Activated CD4-positive, alpha-beta memory T cell treated with anti-CD3 and anti-CD28 coated beads for 36 hours (primary cell): ENCODE measurements at regions of chr12 and their contacts with region 1.

Region 1: DNA sequence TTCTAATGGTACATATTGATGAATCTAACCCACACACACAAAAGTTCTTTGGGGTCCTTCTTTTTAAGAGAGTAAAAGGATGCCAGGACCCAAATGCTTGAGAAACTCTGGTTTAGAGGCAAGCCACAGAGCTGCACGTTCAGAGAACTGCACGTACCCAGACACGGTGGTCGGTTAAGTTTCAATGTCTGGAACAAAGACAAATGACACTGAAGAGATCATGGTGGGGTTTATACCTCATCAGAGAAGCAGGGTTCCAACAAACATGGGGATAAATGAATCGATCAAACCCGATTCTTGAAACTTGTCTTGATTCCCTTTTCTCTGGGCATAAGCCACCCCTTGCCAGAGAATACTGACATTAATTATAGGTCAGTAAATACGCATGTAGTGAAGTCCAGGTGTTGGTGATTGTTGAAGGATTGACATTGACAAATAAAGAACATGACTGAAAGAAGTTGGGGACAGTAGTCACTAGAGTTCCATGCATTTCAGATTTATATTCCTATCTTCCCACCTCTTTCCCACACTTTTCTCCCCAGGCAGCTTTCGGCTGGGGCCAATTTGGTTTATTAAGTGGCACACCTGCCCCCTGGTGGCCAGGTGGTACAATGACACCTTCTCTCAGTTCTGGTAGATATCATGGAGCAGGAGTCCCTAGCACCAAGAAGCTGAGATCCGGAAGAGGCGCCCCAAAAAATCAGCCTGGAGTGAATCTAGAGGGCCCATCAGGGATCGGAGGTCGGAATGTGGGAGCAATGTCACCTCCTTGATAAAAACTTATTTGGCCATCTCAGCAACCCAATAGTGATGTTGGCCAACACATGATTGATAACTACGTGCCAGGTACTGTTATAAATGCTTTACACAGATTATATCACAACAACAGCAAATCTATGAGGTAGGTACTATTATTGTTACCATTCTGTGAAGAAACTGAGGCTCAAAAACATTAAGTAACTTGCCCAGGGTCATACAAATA is 17.8 kb upstream of the HDAC7 start:
- DNase-seq: peak; percentile 76
- H3K4me3 Mint-ChIP-seq: no peak overlapping the region
- H3K27ac Mint-ChIP-seq: peak overlapping the region; percentile 68
- H3K4me1 Mint-ChIP-seq: peaks cover 59% of the 10 kb centered on the region
- H3K27me3 Mint-ChIP-seq: no peaks in the 10 kb centered on the region

Region 2: GRCh38 chr12:47651368-47652254 is 185.9 kb before region 1 on chr12:
- CTCF ChIA-PET with region 1: interaction called, 8 read pairs
- POLR2A ChIA-PET with region 1: no interaction called
- intact Hi-C with region 1: loop called (anchors 1 kb)
- DNase-seq: peak; percentile 64
- H3K4me3 Mint-ChIP-seq: no peak overlapping the region
- H3K27ac Mint-ChIP-seq: no peak overlapping the region
- H3K4me1 Mint-ChIP-seq: peaks cover 20% of the 10 kb centered on the region
- H3K27me3 Mint-ChIP-seq: no peaks in the 10 kb centered on the region

Region 3: GRCh38 chr12:47725893-47726292 is 111.6 kb before region 1 on chr12:
- CTCF ChIA-PET with region 1: interaction called, 13 read pairs
- POLR2A ChIA-PET with region 1: no interaction called
- intact Hi-C with region 1: no loop called
- DNase-seq: no peak
- H3K4me3 Mint-ChIP-seq: no peak overlapping the region
- H3K27ac Mint-ChIP-seq: no peak overlapping the region
- H3K4me1 Mint-ChIP-seq: peaks cover 7% of the 10 kb centered on the region
- H3K27me3 Mint-ChIP-seq: no peaks in the 10 kb centered on the region

Region 4: GRCh38 chr12:47767216-47767724 is 70.2 kb before region 1 on chr12:
- CTCF ChIA-PET with region 1: interaction called, 127 read pairs
- POLR2A ChIA-PET with region 1: interaction called, 7 read pairs
- intact Hi-C with region 1: no loop called
- DNase-seq: peak; percentile 86
- H3K4me3 Mint-ChIP-seq: no peak overlapping the region
- H3K27ac Mint-ChIP-seq: no peak overlapping the region
- H3K4me1 Mint-ChIP-seq: no peaks in the 10 kb centered on the region
- H3K27me3 Mint-ChIP-seq: no peaks in the 10 kb centered on the region

Region 5: GRCh38 chr12:47791874-47792273 is 45.6 kb before region 1 on chr12:
- CTCF ChIA-PET with region 1: interaction called, 795 read pairs
- POLR2A ChIA-PET with region 1: interaction called, 7 read pairs
- intact Hi-C with region 1: loop called (anchors 1 kb)
- DNase-seq: no peak
- H3K4me3 Mint-ChIP-seq: no peak overlapping the region
- H3K27ac Mint-ChIP-seq: peak overlapping the region; percentile 38
- H3K4me1 Mint-ChIP-seq: peaks cover 19% of the 10 kb centered on the region
- H3K27me3 Mint-ChIP-seq: no peaks in the 10 kb centered on the region

Region 6: DNA sequence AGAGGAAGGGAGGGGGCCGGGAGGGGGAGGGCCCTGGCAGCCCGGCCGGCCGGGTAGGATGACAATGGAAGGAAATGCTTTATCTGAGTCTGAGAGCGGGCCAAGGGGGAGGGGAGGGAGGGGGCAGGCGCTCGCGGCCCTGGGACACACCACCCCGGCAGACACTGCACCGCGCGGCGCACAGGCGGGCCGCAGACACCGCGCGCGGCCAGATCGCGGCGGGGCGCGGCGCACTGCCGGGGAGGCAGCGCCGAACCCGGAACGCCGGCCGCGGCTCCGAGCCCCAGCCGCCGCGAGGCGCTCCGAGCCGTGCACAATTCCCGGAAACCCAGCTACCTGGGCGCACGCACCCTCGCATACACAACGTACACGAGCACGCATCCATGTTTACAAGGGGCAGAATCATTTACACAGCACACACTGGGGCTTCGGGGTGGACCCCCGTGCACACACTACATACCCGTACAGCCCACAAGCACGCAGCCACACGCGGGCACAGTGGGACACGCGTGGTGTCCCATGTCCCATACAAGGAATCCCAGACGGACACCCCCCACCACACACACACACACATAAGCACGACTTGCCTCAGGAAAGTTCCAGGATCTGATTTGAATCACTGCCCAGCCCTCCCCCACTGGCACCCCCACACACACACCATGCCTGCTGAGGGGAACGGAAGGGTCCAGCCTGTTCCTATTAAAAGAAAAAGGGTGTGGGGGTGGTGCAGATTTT is 17.4 kb before region 1 on chr12 and contains the start of gene HDAC7:
- CTCF ChIA-PET with region 1: interaction called, 795 read pairs
- POLR2A ChIA-PET with region 1: interaction called, 540 read pairs
- intact Hi-C with region 1: loop called (anchors 1 kb)
- DNase-seq: peak; percentile 86
- H3K4me3 Mint-ChIP-seq: peak within 1 kb of the TSS; percentile 94
- H3K27ac Mint-ChIP-seq: peak within 1 kb of the TSS; percentile 99
- H3K4me1 Mint-ChIP-seq: peaks cover 68% of the 10 kb centered on the region
- H3K27me3 Mint-ChIP-seq: no peaks in the 10 kb centered on the region
- total RNA-seq, gene HDAC7: 257 to 280 TPM

Region 7: DNA sequence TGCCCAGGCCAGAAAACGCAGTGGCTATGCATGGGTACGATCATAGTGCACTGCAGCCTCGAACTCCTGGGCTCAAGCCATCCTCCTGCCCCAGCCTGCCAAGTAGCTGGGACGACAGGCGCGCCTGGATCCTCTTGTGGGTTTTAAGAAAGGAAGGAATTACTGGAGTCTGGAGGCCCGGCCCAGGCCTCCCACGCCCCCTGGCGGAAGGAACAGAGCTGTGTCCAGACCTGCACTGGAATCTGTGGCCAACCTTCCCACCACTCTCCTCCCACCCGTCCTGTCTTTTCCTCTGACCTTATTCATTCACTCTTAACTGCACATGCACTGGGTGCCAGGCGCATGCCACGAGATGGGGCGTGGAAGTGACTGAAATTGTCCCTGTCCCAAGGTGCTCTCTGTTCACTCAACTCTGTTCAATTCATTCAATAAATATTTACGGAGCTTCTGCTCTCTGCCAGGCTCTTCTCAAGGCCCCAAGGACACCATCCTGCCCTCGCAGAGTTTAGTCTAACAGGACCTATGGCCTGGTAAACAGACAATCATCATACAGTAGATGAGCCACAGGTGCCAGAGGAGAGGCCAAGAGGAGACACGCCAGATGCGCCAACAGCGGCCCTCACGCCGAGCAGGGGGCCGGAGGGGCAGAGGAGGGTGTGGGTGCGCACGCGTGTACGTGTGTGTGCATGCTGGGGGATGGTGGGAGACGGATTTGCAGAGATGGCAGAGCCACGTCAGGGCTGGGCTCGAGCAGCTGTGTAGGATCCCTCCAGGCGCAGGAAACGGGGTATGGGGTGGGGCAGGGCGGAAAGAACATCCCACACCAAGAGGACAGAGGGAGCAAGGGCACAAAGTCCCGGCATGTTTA is 112.2 kb after region 1 on chr12:
- CTCF ChIA-PET with region 1: interaction called, 13 read pairs
- POLR2A ChIA-PET with region 1: no interaction called
- intact Hi-C with region 1: no loop called
- DNase-seq: peak; percentile 72
- H3K4me3 Mint-ChIP-seq: no peak overlapping the region
- H3K27ac Mint-ChIP-seq: no peak overlapping the region
- H3K4me1 Mint-ChIP-seq: peaks cover 5% of the 10 kb centered on the region
- H3K27me3 Mint-ChIP-seq: peaks cover 3% of the 10 kb centered on the region

Region 8: DNA sequence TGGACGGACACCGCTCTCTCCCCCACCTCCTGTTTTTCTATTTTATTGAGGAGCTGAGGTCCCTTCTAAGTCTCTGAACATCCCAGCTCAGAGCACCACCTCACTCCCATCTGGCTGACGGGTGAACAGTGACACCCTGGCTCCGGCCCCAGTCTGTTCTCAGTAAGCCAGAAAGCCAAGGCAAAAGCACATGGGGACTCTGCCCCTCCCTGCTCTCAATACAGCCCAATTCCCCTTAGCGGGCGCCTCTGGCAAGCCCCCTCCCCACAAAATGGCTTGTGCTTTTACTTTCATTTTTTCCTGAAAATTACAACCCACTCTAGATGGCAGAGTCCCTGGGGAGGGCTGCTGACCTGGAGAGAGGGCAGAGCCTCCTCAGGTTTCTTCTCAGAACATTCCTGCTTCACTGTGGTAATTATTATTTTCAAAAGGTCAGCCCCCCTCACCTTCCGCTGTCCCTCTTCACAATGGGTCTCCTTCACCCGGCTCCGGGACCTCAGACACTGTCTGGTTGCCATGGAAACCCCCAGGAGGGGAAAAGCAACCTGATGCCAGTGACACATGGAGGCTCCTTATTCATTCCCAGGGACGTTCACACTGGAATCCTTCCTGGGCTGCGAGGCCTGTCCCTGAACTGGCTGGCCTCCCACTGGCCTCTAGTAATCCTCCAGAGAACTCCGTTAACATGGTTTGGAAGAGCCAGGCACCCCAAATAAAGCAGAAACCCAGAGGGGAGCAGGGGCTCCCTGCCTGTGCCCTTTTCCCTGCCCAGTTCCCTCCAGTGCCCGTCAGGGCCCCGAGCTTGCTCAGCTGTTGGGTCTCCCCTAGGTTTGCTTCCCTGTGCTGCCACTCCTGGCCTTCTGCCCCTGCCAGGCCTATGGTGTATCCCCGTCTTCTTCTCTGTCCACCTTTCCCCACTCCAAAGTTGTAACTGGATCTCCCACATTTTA is 150.9 kb after region 1 on chr12:
- CTCF ChIA-PET with region 1: no interaction called
- POLR2A ChIA-PET with region 1: no interaction called
- intact Hi-C with region 1: no loop called
- DNase-seq: no peak
- H3K4me3 Mint-ChIP-seq: no peak overlapping the region
- H3K27ac Mint-ChIP-seq: no peak overlapping the region
- H3K4me1 Mint-ChIP-seq: peaks cover 20% of the 10 kb centered on the region
- H3K27me3 Mint-ChIP-seq: peaks cover 4% of the 10 kb centered on the region